MCF 10A (cell line): ENCODE measurements at regions of chr3 and their contacts with region 1.

Region 1: DNA sequence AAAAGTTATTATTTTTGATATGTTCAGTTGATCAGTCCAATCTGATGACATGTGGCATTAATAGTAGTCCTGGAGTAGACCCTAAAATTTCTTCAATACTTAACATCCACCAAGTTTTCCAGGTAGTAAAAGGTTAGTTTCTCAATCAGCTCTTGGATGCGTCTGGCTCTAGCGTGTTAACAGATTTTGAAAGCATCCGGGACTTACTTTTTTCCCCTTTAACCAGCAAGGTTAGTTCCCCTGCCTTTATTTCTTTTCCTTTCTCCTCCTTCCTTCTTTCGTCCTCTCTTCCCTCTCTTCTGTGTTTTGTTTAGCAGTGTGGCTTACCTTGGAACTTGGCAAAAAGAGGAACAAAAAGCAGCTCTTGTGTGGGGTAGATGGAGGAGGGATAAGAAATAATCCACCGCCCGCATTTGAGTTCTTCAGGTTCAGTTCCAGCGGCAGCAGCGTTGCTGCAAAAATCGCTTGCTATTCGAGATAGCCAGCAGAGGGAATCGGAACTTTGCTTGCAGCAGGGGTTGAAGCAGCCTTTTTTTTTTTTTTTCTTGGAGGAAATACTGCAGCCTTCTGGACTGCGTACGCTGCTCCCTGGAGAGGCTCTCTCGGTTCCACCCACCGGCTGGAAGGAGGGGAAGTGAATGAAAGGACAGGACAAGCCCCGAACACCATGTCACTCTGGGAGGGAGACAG is at the start of gene RBMS3:
- DNase-seq: peak; percentile 93
- H3K4me3 Mint-ChIP-seq: peak within 1 kb of the TSS; percentile 79
- H3K27ac Mint-ChIP-seq: peak within 1 kb of the TSS; percentile 85
- H3K4me1 Mint-ChIP-seq: peaks cover 25% of the 10 kb centered on the region
- H3K27me3 Mint-ChIP-seq: no peaks in the 10 kb centered on the region
- CTCF ChIP-seq: peak; percentile 42
- total RNA-seq, gene RBMS3: 65.5 and 74.2 TPM in 2 replicates

Region 2: DNA sequence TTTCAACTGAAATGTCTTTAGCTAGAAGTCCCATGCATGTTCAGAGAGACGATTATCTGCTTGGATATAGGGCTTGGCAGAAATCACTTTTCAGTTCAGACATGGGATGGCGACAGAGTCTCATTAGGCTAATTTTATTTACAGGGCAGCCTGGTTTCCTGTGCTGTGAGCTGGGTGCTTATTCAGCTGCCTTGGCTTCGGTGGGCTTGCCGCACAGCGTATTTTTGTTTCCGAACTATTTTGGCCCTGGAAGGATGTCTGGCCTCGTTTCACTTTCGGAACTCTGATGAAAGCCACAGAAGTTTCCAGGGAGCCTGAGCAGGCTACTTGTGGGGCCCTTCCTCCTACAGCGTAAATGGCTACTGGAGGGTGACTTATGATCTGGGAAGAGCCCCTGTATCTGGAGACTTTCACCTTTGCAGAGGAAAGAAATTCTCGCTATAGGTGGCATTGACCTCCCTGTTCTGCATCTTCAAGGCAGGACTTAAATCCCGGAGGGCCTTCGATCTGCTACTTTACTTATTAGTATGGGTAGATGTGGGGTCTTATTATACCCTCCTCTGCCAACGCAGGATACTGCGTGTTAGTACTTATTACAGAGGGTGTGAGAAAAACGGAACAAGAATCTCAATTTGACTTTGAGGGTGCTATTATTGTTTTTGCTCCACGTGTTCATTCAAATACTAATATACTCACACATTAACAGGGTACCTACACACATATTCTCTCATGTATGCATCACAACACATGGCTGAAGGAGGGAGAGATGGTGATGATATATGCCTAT is 363.6 kb before region 1 on chr3:
- CTCF ChIA-PET with region 1: interaction called, 17 read pairs
- POLR2A ChIA-PET with region 1: interaction called, 27 read pairs
- intact Hi-C with region 1: loop called (anchors 1 kb)
- DNase-seq: peak; percentile 57
- H3K4me3 Mint-ChIP-seq: no peak overlapping the region
- H3K27ac Mint-ChIP-seq: no peak overlapping the region
- H3K4me1 Mint-ChIP-seq: peaks cover 13% of the 10 kb centered on the region
- H3K27me3 Mint-ChIP-seq: no peaks in the 10 kb centered on the region
- CTCF ChIP-seq: peak; percentile 61

Region 3: GRCh38 chr3:29186982-29187725 is 93.4 kb before region 1 on chr3:
- CTCF ChIA-PET with region 1: interaction called, 4 read pairs
- POLR2A ChIA-PET with region 1: no interaction called
- intact Hi-C with region 1: loop called (anchors 5 kb)
- DNase-seq: peak; percentile 62
- H3K4me3 Mint-ChIP-seq: no peak overlapping the region
- H3K27ac Mint-ChIP-seq: peak overlapping the region; percentile 44
- H3K4me1 Mint-ChIP-seq: peaks cover 23% of the 10 kb centered on the region
- H3K27me3 Mint-ChIP-seq: no peaks in the 10 kb centered on the region
- CTCF ChIP-seq: no peak

Region 4: GRCh38 chr3:29329986-29330890 is 49.7 kb after region 1 on chr3:
- CTCF ChIA-PET with region 1: interaction called, 4 read pairs
- POLR2A ChIA-PET with region 1: interaction called, 184 read pairs
- intact Hi-C with region 1: loop called (anchors 5 kb)
- DNase-seq: no peak
- H3K4me3 Mint-ChIP-seq: no peak overlapping the region
- H3K27ac Mint-ChIP-seq: peak overlapping the region; percentile 39
- H3K4me1 Mint-ChIP-seq: peaks cover 39% of the 10 kb centered on the region
- H3K27me3 Mint-ChIP-seq: no peaks in the 10 kb centered on the region
- CTCF ChIP-seq: no peak

Region 5: GRCh38 chr3:29389362-29389761 is 108.8 kb after region 1 on chr3:
- CTCF ChIA-PET with region 1: no interaction called
- POLR2A ChIA-PET with region 1: no interaction called
- intact Hi-C with region 1: no loop called
- DNase-seq: no peak
- H3K4me3 Mint-ChIP-seq: no peak overlapping the region
- H3K27ac Mint-ChIP-seq: no peak overlapping the region
- H3K4me1 Mint-ChIP-seq: no peaks in the 10 kb centered on the region
- H3K27me3 Mint-ChIP-seq: no peaks in the 10 kb centered on the region
- CTCF ChIP-seq: no peak

Region 6: DNA sequence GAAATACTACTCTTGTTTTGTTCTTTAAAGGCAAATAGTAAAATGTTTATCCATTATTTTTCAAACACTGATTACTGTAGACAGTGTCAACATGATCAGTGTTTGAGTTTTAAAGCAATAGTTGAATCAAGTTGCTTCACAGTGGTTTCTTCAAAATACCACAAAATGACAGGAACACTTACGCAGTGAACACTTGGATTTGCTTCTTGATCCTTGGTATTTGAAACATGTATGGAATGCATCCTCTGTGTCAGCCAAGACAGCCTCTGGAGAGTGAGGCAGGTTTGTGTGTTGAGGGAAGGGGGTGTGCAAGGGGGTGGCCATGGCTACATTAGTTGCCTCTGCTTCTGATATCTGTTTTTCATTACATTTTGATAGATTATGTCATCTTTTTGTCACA is 413.3 kb after region 1 on chr3:
- CTCF ChIA-PET with region 1: interaction called, 6 read pairs
- POLR2A ChIA-PET with region 1: interaction called, 21 read pairs
- intact Hi-C with region 1: loop called (anchors 1 kb)
- DNase-seq: peak; percentile 89
- H3K4me3 Mint-ChIP-seq: peak overlapping the region; percentile 43
- H3K27ac Mint-ChIP-seq: peak overlapping the region; percentile 91
- H3K4me1 Mint-ChIP-seq: peaks cover 44% of the 10 kb centered on the region
- H3K27me3 Mint-ChIP-seq: no peaks in the 10 kb centered on the region
- CTCF ChIP-seq: no peak

Region 7: DNA sequence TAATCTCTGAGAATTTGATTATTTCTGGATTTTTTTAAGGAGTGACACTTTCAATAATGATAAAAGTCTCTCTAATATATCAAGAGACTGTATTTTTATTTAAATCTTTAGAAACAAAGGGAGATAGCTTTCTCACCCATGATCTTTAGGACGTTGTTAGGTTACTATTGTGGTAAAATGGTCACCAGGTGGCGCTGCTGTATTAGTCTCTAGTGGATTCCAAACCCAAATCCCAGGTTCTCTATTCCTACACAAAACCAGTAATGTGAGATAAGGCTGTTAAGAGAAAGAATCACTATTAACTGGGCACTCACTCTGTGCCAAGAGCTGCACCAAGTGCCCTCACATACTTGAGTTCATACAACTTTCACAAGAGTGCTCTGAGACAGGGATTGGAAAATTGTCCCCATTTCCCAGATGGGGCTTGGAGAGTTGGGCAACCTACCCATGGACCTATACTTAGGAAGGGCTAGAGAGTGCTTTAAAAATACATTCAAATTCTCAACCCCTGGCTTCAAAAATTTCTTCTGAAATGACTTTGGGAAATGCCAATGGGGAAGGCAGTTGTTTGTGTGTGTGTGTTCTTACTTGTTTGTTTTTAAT is 732.5 kb after region 1 on chr3:
- CTCF ChIA-PET with region 1: no interaction called
- POLR2A ChIA-PET with region 1: no interaction called
- intact Hi-C with region 1: loop called (anchors 10 kb)
- DNase-seq: peak; percentile 82
- H3K4me3 Mint-ChIP-seq: no peak overlapping the region
- H3K27ac Mint-ChIP-seq: no peak overlapping the region
- H3K4me1 Mint-ChIP-seq: no peaks in the 10 kb centered on the region
- H3K27me3 Mint-ChIP-seq: no peaks in the 10 kb centered on the region
- CTCF ChIP-seq: peak; percentile 53